ENCODE measurements at regions of chr16 and their contacts with region 1.

Region 1: GRCh38 chr16:30571695-30572600 is at the start of gene ZNF688:
- DNase-seq: peak; percentile 92 to 97 (median 94)
- ATAC-seq: peak; percentile 88
- H3K4me3 ChIP-seq: peak within 1 kb of the TSS; percentile 65
- H3K27ac ChIP-seq: peak within 1 kb of the TSS; percentile 83
- H3K4me1 ChIP-seq: peaks cover 17 to 36% of the 10 kb centered on the region in 2 experiments
- H3K27me3 ChIP-seq: no peaks in the 10 kb centered on the region
- CTCF ChIP-seq: 0 out of 6 replicates have a peak, but pooled peaks of 1 of the 3 experiments have one; percentile 4
- EP300 ChIP-seq: no peak
- POLR2A ChIP-seq: peak; percentile 80
- RAD21 ChIP-seq: peak in 1 of 2 experiments; percentile 9; a peak in 1 of 4 replicates
- polyA plus RNA-seq, gene ZNF688: 0.48 TPM

Region 2: GRCh38 chr16:30470170-30470512 is 101.8 kb before region 1 on chr16:
- CTCF ChIA-PET with region 1: no interaction called
- POLR2A ChIA-PET with region 1: no interaction called
- in situ Hi-C with region 1: no loop called
- intact Hi-C with region 1: no loop called
- DNase-seq: no peak
- ATAC-seq: no peak
- H3K4me3 ChIP-seq: no peak overlapping the region
- H3K27ac ChIP-seq: no peak overlapping the region
- H3K4me1 ChIP-seq: peaks cover 0 to 10% of the 10 kb centered on the region in 2 experiments; a peak in 2 of 5 replicates
- H3K27me3 ChIP-seq: no peaks in the 10 kb centered on the region
- CTCF ChIP-seq: no peak
- EP300 ChIP-seq: no peak
- POLR2A ChIP-seq: no peak
- RAD21 ChIP-seq: no peak

Region 3: DNA sequence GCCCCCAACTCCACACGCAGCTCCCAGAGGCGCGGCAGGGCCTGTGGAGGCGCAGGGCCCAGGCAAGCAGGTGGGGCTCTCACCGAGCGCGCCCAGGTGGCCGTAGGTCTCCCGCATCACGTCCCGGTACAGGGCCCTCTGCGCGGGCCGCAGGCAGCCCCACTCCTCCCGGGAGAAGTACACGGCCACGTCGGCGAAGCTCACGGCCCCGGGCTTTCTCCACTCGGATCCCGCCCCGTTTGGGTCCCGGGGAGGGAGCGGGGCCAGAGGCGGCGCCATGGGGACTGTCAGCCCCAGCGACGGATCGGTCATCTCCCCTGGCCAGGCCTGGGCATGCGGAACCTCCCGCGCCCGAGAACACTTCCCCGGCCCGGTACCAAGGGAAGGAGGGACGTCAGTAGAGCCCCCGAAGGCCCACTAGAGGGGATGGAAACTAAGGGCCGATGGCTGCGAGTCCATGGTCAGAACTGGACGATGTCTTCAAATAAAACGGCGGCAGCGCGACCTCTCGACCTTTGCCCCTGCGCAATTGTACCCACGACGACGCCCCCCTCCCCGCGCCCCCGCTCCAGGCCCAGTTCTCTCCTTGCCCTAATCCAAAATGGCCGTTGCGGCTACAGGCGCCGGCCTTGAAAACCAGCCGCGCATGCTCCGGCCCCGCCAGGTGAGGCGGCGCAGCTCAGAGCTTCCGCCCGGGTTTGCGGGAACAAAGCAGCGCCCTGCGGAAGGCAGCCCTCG is 37.4 kb before region 1 on chr16 and contains the start of gene ZNF747:
- CTCF ChIA-PET with region 1: no interaction called
- POLR2A ChIA-PET with region 1: interaction called, 9 read pairs
- in situ Hi-C with region 1: no loop called
- intact Hi-C with region 1: loop called (anchors 1 kb)
- DNase-seq: peak; percentile 83 to 94 (median 88)
- ATAC-seq: peak; percentile 88
- H3K4me3 ChIP-seq: peak within 1 kb of the TSS; percentile 49
- H3K27ac ChIP-seq: peak within 1 kb of the TSS; percentile 96
- H3K4me1 ChIP-seq: peaks cover 9 to 50% of the 10 kb centered on the region in 2 experiments; a peak in 4 of 5 replicates
- H3K27me3 ChIP-seq: no peaks in the 10 kb centered on the region
- CTCF ChIP-seq: peak in 1 of 3 experiments; percentile 6; a peak in 2 of 6 replicates
- EP300 ChIP-seq: no peak
- POLR2A ChIP-seq: no peak
- RAD21 ChIP-seq: 0 out of 4 replicates have a peak, but pooled peaks of 1 of the 2 experiments have one; percentile 5
- polyA plus RNA-seq, gene ZNF747: 0.14 to 0.27 TPM

Region 4: GRCh38 chr16:30585400-30586189 is 13.6 kb after region 1 on chr16 and contains the start of gene ZNF785:
- CTCF ChIA-PET with region 1: no interaction called
- POLR2A ChIA-PET with region 1: interaction called, 28 read pairs
- in situ Hi-C with region 1: no loop called
- intact Hi-C with region 1: no loop called
- DNase-seq: peak; percentile 98 to 99 (median 99)
- ATAC-seq: peak; percentile 90
- H3K4me3 ChIP-seq: peak within 1 kb of the TSS; percentile 61
- H3K27ac ChIP-seq: peak within 1 kb of the TSS; percentile 99
- H3K4me1 ChIP-seq: peaks cover 13 to 43% of the 10 kb centered on the region in 2 experiments; a peak in 4 of 5 replicates
- H3K27me3 ChIP-seq: no peaks in the 10 kb centered on the region
- CTCF ChIP-seq: peak; percentile 20 to 44 (median 29); a peak in 3 of 6 replicates
- EP300 ChIP-seq: peak; percentile 32
- POLR2A ChIP-seq: peak; percentile 79
- RAD21 ChIP-seq: peak; percentile 13 to 31; a peak in 2 of 4 replicates
- polyA plus RNA-seq, gene ZNF785: 0.64 to 0.70 TPM

Region 5: GRCh38 chr16:30874821-30875717 is 303.1 kb after region 1 on chr16:
- CTCF ChIA-PET with region 1: no interaction called
- POLR2A ChIA-PET with region 1: no interaction called
- in situ Hi-C with region 1: no loop called
- intact Hi-C with region 1: no loop called
- DNase-seq: peak; percentile 83 to 96 (median 88)
- ATAC-seq: peak; percentile 94
- H3K4me3 ChIP-seq: peak overlapping the region; percentile 77
- H3K27ac ChIP-seq: peak overlapping the region; percentile 88
- H3K4me1 ChIP-seq: peaks cover 13 to 36% of the 10 kb centered on the region in 2 experiments
- H3K27me3 ChIP-seq: no peaks in the 10 kb centered on the region
- CTCF ChIP-seq: peak in 2 of 3 experiments; percentile 5 to 32; a peak in 2 of 6 replicates
- EP300 ChIP-seq: peak; percentile 36; the same call in 1 of the 2 replicates
- POLR2A ChIP-seq: peak; percentile 97
- RAD21 ChIP-seq: peak in 1 of 2 experiments; percentile 6; a peak in 1 of 4 replicates